Common myeloid progenitor, CD34-positive (primary cell): ENCODE measurements at regions of chr1 and their contacts with region 1.

Region 1: DNA sequence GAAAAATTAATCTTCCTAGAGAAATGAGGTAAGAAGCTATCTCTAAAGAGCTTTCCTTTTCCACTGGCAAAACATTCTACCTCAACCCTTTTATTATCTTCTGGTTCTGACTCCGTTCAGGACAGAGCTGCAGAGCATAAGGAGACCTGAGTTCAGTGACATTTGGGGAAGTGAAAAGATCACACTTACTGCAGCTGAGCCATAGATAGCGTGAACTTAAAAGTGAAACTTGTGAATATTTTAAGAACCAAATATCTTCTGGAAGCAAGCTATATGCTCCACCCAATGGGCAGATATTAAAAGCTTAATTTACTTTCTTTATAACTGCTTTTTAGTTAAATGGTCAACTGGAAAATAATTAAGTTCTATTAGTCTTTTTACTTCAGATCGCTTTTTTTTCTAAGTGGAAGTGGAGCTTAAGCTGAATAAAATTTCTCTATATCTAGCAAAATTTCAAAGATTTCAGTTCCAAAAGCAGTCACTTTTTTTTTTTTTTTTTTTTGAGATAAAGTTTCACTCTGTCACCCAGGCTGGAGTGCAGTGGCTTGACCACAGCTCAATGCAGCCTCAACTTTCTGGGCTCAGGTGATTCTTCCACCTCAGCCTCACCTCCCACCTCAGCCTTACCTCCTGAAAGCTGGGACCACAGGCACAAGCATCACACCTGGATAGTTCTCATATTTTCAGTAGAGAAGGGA is 11.9 kb downstream of the PTPN22 start:
- DNase-seq: peak; percentile 52 to 82 (median 74)
- H3K4me3 ChIP-seq: peak overlapping the region in 5 of 7 experiments; percentile 32 to 68 (median 51)
- H3K27ac ChIP-seq: peak overlapping the region; percentile 62 to 76
- H3K4me1 ChIP-seq: peaks cover 18 to 48% (median 30%) of the 10 kb centered on the region in 4 experiments
- H3K27me3 ChIP-seq: no peaks in the 10 kb centered on the region

Region 2: DNA sequence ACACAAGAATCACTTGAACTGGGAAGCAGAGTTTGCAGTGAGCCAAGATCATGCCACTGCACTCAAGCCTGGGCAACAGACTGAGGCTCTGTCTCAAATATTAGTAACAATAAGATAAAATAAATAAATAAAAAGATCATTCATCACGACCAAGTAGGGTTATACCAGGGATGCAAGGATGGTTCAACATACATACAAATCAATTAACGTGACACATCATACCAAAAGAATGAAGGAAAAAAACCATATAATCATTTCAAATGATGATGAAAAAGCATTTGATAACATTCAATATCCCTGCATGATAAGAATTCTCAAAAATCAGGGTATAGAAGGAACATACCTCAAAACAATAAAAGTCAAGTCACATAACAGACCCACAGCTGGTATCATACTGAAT is 138.6 kb before region 1 on chr1:
- CTCF ChIA-PET with region 1: no interaction called
- POLR2A ChIA-PET with region 1: no interaction called
- DNase-seq: peak in 2 of 3 donors; percentile 20 to 45
- H3K4me3 ChIP-seq: no peak overlapping the region
- H3K27ac ChIP-seq: no peak overlapping the region
- H3K4me1 ChIP-seq: no peaks in the 10 kb centered on the region
- H3K27me3 ChIP-seq: no peaks in the 10 kb centered on the region

Region 3: GRCh38 chr1:113818578-113818977 is 41.0 kb before region 1 on chr1:
- CTCF ChIA-PET with region 1: no interaction called
- POLR2A ChIA-PET with region 1: no interaction called
- DNase-seq: no peak
- H3K4me3 ChIP-seq: no peak overlapping the region
- H3K27ac ChIP-seq: no peak overlapping the region
- H3K4me1 ChIP-seq: no peaks in the 10 kb centered on the region
- H3K27me3 ChIP-seq: no peaks in the 10 kb centered on the region

Region 4: GRCh38 chr1:113874012-113874879 is 14.6 kb after region 1 on chr1:
- CTCF ChIA-PET with region 1: interaction called, 21 read pairs
- POLR2A ChIA-PET with region 1: interaction called, 4 read pairs
- DNase-seq: peak; percentile 51 to 84 (median 75)
- H3K4me3 ChIP-seq: no peak overlapping the region
- H3K27ac ChIP-seq: peak overlapping the region in 1 of 2 experiments; percentile 38
- H3K4me1 ChIP-seq: peaks cover 19 to 59% (median 38%) of the 10 kb centered on the region in 4 experiments
- H3K27me3 ChIP-seq: no peaks in the 10 kb centered on the region

Region 5: GRCh38 chr1:114075546-114076242 is 216.1 kb after region 1 on chr1:
- CTCF ChIA-PET with region 1: no interaction called
- POLR2A ChIA-PET with region 1: no interaction called
- DNase-seq: no peak
- H3K4me3 ChIP-seq: no peak overlapping the region
- H3K27ac ChIP-seq: no peak overlapping the region
- H3K4me1 ChIP-seq: peaks cover 0 to 4% (median 0%) of the 10 kb centered on the region in 4 experiments
- H3K27me3 ChIP-seq: peaks cover 0 to 1% (median 0%) of the 10 kb centered on the region in 5 experiments